Activated CD4-positive, alpha-beta T cell treated with anti-CD3 and anti-CD28 coated beads, Interleukin-2, amount 10 ng/mL, durations not matched to agents 24 days and 14 days (primary cell): ENCODE measurements at regions of chr1 and their contacts with region 1.

Region 1: DNA sequence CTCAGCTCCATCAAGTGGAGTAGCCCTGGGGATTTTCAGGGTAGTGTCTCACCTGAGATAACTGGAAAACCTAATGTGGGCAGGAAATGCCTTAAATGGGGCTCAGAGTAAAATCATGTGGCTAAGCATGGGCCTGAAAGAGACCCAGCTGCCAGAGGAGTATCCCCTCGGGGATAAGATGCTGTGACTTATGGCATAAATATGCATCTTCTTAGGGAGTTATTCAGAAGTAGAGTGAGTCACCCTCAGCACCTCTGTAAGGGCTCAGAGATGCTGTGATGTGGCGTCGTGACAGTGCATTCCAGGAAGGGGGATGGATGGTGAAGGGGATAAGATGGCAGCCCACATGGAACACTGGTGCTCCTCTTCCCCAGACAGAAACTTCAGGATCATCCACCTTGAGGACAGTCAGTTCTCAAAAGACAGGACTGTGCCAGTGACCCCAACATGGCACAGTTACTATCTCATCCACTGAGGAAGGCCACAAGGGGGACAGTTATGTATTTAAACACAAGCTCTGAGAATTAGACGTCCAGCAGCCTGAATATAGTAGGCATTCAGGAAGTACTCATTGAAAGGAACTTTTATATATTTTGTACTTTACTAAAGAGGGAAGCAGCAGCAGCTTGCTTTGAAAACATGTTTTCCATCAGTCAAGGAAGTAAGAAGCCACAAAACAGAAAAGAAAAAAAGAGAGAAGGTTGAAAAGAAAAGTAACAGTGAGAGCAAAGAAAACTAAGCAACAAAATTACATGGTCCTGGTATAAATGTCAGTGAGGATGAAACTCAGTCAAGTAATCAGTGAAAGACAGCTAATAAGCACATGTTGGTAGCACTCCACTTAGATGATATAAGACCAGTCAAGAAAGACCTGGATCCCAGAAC is 8.3 kb downstream of the IL24 start:
- DNase-seq: peak; percentile 73
- H3K4me3 Mint-ChIP-seq: peak overlapping the region; percentile 57
- H3K27ac Mint-ChIP-seq: peak overlapping the region; percentile 62
- H3K4me1 Mint-ChIP-seq: peaks cover 39% of the 10 kb centered on the region
- H3K27me3 Mint-ChIP-seq: peaks cover 3% of the 10 kb centered on the region

Region 2: GRCh38 chr1:206890690-206891089 is 14.8 kb before region 1 on chr1:
- intact Hi-C with region 1: loop called (anchors 2 kb)
- DNase-seq: no peak
- H3K4me3 Mint-ChIP-seq: peak overlapping the region; percentile 45
- H3K27ac Mint-ChIP-seq: peak overlapping the region; percentile 60
- H3K4me1 Mint-ChIP-seq: peaks cover 49% of the 10 kb centered on the region
- H3K27me3 Mint-ChIP-seq: peaks cover 3% of the 10 kb centered on the region